ENCODE measurements at regions of chr17 and their contacts with region 1.

Region 1: DNA sequence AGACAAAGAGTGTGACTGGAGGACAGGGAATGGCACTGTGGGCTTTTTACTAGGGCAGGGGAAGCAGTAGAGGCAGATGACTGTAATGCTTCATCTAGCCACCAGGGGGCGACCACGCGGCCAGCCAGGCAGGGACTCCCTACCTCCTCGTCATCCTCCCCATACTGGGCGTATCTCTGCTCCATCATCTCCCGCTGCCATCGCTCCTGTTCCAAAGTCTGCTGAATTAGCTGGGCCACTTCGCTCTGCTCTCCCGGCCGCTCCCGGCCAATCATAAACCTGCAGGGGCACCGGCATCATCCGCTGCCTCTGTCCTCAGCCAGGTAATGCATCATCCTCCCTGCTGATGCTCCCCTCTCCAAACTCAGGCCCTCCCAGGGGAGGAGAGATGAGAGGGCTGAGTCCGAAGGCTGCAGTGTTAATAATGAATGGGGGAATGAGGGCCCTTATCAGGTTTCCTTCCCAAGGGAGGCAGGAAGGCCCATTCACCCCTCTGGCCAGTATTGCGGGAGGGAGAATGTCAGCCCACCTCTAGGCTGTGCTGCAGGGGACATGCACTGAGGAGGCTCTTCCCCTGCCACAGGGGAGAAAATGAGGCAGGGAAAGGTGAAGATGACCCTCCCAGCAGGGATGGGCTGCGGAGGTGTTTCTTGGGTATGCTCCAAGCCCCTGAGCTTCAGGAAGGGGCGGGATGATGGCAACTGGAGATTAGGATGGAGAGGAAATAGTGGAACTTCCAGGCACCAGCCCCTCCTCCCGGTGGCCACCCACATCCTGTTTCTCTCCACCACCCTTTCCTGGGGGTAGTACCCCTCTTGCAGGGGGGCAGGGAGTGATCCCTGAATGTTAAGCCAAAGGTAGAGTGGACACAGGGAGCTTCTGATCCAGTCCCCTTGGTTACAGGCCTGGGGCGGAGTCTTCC is 10.3 kb upstream of the SAMD14 start:
- DNase-seq: peak; percentile 61 to 89 (median 83)
- ATAC-seq: peak; percentile 92
- H3K4me3 ChIP-seq: peak overlapping the region; percentile 7 to 24
- H3K4me3 Mint-ChIP-seq: peak overlapping the region; percentile 59
- H3K27ac ChIP-seq: peak overlapping the region in 1 of 2 experiments; percentile 47
- H3K27ac Mint-ChIP-seq: peak overlapping the region; percentile 70
- H3K4me1 ChIP-seq: peaks cover 52% of the 10 kb centered on the region
- H3K4me1 Mint-ChIP-seq: peaks cover 54% of the 10 kb centered on the region
- H3K27me3 ChIP-seq: no peaks in the 10 kb centered on the region
- H3K27me3 Mint-ChIP-seq: no peaks in the 10 kb centered on the region
- CTCF ChIP-seq: peak; percentile 92

Region 2: DNA sequence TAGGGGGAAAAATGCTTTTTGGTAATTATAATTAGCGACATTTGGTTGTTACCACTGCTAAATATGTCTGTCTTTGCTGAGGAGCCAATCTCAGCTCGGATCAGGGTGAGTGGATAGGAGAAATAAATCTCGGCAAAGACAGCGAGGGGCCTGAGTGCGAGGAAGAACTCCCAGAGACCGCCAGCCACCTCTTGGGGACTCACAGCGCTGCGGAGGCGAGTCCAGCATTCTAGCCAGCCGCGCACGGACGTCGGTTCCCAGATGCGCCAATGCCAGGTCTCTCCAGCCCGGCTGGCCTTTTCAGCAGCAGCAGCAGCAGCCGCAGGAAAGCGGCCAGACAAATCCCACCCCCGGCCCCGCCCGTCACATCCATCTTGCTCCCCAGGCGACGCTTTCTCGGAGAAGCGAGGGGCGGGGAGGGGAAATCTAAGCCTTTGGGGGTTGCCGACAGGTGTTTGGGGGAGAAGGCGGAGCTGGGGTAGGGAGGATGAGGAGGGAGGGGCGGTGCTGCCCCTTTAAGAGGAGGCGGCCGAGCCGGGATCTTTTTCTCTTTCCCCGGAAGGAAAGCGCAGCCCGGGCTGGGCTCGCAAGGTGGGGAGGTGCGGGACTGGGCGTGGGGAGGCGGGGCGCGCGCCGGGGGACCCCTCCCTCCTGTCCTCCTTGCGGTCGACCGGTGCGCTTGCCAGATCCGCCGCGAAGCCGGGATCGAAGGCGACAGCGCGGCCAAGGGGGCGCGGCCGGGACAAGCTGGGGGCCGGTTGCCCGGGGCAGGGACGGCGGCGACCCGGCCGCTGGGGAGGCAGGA is 84.6 kb before region 1 on chr17 and contains the start of gene ITGA3:
- CTCF ChIA-PET with region 1: no interaction called
- POLR2A ChIA-PET with region 1: no interaction called
- intact Hi-C with region 1: loop called in 1 of 2 experiments (anchors 1 kb)
- DNase-seq: peak in 8 of 9 experiments; percentile 36 to 72 (median 63)
- ATAC-seq: peak; percentile 69
- H3K4me3 ChIP-seq: peak within 1 kb of the TSS; percentile 64 to 67
- H3K4me3 Mint-ChIP-seq: peak within 1 kb of the TSS; percentile 89
- H3K27ac ChIP-seq: no peak within 1 kb of the TSS
- H3K27ac Mint-ChIP-seq: peak within 1 kb of the TSS; percentile 72
- H3K4me1 ChIP-seq: peaks cover 9% of the 10 kb centered on the region
- H3K4me1 Mint-ChIP-seq: peaks cover 19% of the 10 kb centered on the region
- H3K27me3 ChIP-seq: no peaks in the 10 kb centered on the region
- H3K27me3 Mint-ChIP-seq: no peaks in the 10 kb centered on the region
- CTCF ChIP-seq: no peak
- total RNA-seq, gene ITGA3: 1.6 to 2.0 TPM

Region 3: DNA sequence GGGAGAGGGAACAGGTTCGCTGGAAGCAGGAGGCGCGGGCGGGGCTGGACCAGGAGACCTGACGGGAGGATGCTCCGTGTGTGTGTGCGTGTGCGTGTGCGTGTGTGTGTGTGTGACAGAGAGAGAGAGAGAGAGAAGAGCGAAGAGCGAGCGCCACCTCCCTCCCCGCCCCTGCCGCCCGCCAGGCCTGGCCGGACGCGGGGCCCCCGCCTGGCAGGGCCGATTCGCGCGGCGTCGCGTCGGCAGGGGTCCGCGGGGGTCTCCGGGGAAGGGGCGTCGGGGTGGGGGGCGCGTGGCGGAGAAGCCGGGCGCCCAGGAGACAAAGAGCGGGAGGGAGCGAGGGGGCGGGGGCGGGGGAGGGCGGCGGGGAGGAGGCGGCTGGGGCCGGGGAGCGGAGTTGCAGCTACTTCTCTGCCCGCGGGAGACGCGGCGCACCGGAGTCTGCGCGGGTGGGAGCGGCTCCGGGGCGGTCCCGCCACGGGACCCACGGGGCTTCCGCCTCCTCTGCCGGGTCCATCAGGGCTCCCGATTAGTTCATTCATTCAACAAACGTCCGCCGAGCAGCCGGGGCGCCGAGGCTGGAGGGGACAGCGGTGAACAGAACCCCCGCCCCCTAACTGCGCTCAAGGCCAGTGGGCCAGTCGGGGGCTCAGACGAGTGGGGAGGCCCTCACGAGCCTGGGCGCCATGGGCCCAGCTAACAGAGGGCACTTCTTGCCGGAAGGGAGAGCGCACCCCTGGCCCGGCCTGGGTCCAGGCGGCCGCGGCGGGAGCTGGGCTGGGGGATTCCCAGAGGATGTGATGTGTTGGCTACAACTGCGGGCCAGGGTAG is 10.3 kb before region 1 on chr17 and contains the start of gene SAMD14:
- CTCF ChIA-PET with region 1: interaction called, 14 read pairs
- POLR2A ChIA-PET with region 1: interaction called, 10 read pairs
- intact Hi-C with region 1: no loop called
- DNase-seq: peak in 5 of 9 experiments; percentile 48 to 78 (median 72)
- ATAC-seq: peak; percentile 69
- H3K4me3 ChIP-seq: peak within 1 kb of the TSS; percentile 45 to 50
- H3K4me3 Mint-ChIP-seq: peak within 1 kb of the TSS; percentile 83
- H3K27ac ChIP-seq: no peak within 1 kb of the TSS
- H3K27ac Mint-ChIP-seq: peak within 1 kb of the TSS; percentile 81
- H3K4me1 ChIP-seq: peaks cover 26% of the 10 kb centered on the region
- H3K4me1 Mint-ChIP-seq: peaks cover 27% of the 10 kb centered on the region
- H3K27me3 ChIP-seq: peaks cover 6 to 18% of the 10 kb centered on the region in 2 experiments
- H3K27me3 Mint-ChIP-seq: peaks cover 23% of the 10 kb centered on the region
- CTCF ChIP-seq: no peak
- total RNA-seq, gene SAMD14: 0.31 to 0.62 TPM

Region 4: DNA sequence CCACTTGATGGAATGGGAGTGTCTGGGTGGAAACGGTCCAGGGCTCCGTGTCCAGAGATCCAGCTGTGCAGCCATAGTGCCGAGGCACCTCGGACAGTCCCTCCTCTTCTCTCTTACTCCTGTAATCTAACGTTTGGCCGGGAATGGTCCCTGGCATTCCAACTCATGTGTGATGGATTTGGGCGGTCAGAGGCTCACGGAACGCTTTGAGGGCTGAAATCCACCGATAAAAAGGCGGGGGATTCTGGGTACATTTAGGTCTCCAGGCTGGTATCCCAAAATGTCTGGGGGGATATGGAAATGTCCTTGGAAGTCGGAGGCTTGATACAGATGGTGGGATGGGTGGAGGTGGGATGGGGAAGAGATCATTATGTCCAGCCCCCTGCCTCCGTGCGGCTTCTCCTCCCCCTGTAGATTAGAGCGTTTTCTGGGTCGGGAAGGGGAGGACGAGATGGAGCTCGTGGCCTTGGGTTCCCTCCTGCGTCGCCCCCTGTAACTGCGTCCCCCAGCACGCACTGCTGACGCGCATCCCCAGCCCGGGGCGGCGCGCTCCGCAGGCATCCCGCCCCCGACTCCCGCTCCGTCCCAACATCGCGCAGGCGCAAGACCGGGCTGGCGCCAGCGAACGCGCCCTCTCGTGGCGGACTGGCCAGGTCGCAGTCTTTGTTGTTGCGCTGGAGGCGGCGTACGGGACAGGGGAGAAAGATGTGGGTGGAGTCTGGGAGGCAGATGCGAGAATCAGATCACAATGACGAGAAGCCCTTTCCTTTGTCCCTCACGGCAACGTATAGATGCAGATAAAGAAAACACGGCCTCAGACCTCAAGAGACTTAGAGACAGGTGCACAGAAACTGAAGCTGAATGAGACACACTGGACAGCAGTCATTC is 21.1 kb after region 1 on chr17:
- CTCF ChIA-PET with region 1: interaction called, 89 read pairs
- POLR2A ChIA-PET with region 1: interaction called, 5 read pairs
- intact Hi-C with region 1: loop called (anchors 1 kb)
- DNase-seq: peak; percentile 89 to 97 (median 93)
- ATAC-seq: peak; percentile 90
- H3K4me3 ChIP-seq: peak overlapping the region; percentile 49 to 58
- H3K4me3 Mint-ChIP-seq: peak overlapping the region; percentile 69
- H3K27ac ChIP-seq: peak overlapping the region; percentile 43 to 63
- H3K27ac Mint-ChIP-seq: peak overlapping the region; percentile 88
- H3K4me1 ChIP-seq: peaks cover 32% of the 10 kb centered on the region
- H3K4me1 Mint-ChIP-seq: peaks cover 45% of the 10 kb centered on the region
- H3K27me3 ChIP-seq: no peaks in the 10 kb centered on the region
- H3K27me3 Mint-ChIP-seq: no peaks in the 10 kb centered on the region
- CTCF ChIP-seq: peak; percentile 83

Region 5: DNA sequence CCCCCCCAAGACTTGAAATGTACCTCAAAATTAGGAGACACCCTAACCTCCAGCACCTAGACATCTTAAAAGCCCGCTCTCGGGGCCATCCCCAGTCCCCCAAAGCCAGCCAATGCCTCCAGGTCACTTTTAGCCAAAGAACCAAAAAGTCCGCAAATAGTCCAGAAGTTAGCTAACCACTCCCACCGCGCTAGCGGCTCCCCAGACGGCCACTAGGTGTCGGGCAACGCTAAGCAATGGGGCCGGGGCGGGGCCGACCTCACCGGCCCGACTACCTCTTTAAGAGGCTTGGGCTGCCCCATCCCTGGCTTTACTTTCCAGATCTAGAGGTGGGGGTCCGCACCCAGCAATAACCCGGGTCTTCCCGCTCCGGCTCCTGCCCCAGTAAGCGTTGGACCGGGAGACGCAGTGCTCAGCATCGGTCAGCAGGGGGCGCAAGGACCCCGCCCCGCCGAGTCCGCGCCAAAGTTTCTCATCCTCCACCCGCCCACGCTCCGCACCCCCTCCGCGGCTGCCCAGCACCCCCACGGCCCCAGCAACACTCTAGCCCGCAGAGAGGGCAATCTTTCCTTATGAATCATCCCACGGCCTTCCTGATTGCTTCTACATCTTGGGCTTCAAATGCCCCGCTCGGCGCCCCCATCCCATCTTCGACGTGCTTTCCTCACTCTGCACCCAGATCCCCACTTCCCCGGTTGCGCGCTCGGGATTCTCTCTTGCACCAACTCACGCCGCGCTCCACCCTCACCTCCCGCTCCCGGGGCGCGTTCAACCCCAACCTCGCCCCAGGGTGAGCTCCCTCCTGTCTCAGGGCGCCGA is 60.5 kb after region 1 on chr17:
- CTCF ChIA-PET with region 1: interaction called, 10 read pairs
- POLR2A ChIA-PET with region 1: no interaction called
- intact Hi-C with region 1: no loop called
- DNase-seq: peak; percentile 66 to 87 (median 80)
- ATAC-seq: peak; percentile 49
- H3K4me3 ChIP-seq: peak overlapping the region; percentile 47 to 49
- H3K4me3 Mint-ChIP-seq: peak overlapping the region; percentile 78
- H3K27ac ChIP-seq: no peak overlapping the region
- H3K27ac Mint-ChIP-seq: peak overlapping the region; percentile 11
- H3K4me1 ChIP-seq: peaks cover 21% of the 10 kb centered on the region
- H3K4me1 Mint-ChIP-seq: peaks cover 25% of the 10 kb centered on the region
- H3K27me3 ChIP-seq: peaks cover 12 to 20% of the 10 kb centered on the region in 2 experiments
- H3K27me3 Mint-ChIP-seq: peaks cover 42% of the 10 kb centered on the region
- CTCF ChIP-seq: peak; percentile 100

Region 6: GRCh38 chr17:50626037-50626574 is 485.9 kb after region 1 on chr17:
- CTCF ChIA-PET with region 1: no interaction called
- POLR2A ChIA-PET with region 1: no interaction called
- intact Hi-C with region 1: no loop called
- DNase-seq: peak; percentile 30 to 75 (median 63)
- ATAC-seq: peak; percentile 67
- H3K4me3 ChIP-seq: no peak overlapping the region
- H3K4me3 Mint-ChIP-seq: no peak overlapping the region
- H3K27ac ChIP-seq: no peak overlapping the region
- H3K27ac Mint-ChIP-seq: no peak overlapping the region
- H3K4me1 ChIP-seq: no peaks in the 10 kb centered on the region
- H3K4me1 Mint-ChIP-seq: no peaks in the 10 kb centered on the region
- H3K27me3 ChIP-seq: peaks cover 5 to 13% of the 10 kb centered on the region in 2 experiments
- H3K27me3 Mint-ChIP-seq: peaks cover 42% of the 10 kb centered on the region
- CTCF ChIP-seq: peak; percentile 59

Measured in CD8-positive, alpha-beta T cell (primary cell).